ENCODE measurements at regions of chrX and their contacts with region 1.

Region 1: GRCh38 chrX:152157042-152157441 is 18.7 kb upstream of the MAGEA10 start:
- DNase-seq: no peak
- ATAC-seq: no peak
- H3K4me3 ChIP-seq: no peak overlapping the region
- H3K27ac ChIP-seq: no peak overlapping the region
- H3K4me1 ChIP-seq: no peaks in the 10 kb centered on the region
- H3K27me3 ChIP-seq: no peaks in the 10 kb centered on the region
- CTCF ChIP-seq: no peak

Region 2: DNA sequence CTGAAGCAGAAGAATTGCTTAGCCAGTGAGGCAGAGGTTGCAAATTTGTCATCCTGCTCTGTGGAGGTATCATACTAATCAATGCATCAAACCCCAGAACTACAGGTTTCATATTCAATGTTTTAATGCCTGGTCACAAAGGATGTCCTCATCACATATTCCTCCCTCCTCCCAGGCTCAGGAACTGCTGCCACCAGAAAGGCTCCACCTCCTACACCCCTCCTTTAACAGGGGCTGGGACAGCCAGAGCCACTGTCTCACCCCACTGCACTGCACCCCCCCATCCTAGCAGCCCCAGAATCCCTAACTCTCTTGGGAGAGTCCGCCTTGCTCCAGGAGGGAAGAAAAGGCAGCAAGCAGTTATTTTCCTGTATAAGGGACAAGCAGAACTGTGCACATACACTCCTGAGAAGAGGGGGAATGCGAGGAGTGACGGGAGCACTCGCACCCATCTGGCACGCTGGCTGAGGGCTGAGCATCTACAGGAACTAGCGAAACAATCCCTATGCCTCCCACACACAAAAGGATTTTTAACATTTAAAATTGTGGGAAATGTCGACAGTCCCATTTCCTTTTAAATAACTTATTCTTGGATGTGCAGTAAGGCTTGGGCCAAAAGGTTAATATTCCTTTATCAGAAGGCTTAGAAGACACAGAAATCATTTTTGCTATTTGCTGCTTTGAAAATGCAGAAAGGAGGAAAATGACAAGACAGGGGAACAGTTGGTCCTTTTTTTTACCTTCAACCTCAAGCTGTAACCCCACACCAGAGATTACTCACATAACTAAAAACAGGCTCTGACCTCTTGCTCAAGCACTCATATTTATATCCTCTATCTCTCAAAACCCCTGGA is 1286.3 kb before region 1 on chrX:
- intact Hi-C with region 1: no loop called
- DNase-seq: peak in 1 of 2 donors; percentile 3
- ATAC-seq: peak in 6 of 8 donors; percentile 23 to 68 (median 53)
- H3K4me3 ChIP-seq: no peak overlapping the region
- H3K27ac ChIP-seq: peak overlapping the region in 8 of 10 donors; percentile 32 to 68 (median 52)
- H3K4me1 ChIP-seq: peaks cover 0 to 55% (median 32%) of the 10 kb centered on the region in 9 donors
- H3K27me3 ChIP-seq: no peaks in the 10 kb centered on the region
- CTCF ChIP-seq: no peak

Region 3: DNA sequence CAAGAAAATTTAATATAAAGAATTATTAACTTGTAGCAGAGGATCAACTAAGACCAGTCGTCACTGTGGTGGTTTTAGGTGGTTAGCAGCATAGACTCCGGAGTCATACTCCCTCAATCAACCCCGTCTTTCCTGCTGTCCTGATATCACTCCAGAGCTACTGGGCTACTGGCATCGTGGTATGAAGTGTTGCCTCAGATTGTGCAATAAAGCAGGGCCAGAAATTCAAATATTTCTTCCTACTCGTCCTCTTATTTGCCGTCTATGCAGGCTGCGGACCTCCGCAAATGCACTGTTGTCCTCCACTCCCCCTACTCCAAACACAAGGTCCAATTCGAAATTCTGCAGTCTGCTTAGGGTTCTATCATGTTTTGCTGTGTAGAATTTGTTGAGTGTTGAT is 17.5 kb before region 1 on chrX:
- intact Hi-C with region 1: loop called in 1 of 10 experiments (anchors 1 kb)
- DNase-seq: no peak
- ATAC-seq: no peak
- H3K4me3 ChIP-seq: no peak overlapping the region
- H3K27ac ChIP-seq: no peak overlapping the region
- H3K4me1 ChIP-seq: no peaks in the 10 kb centered on the region
- H3K27me3 ChIP-seq: no peaks in the 10 kb centered on the region
- CTCF ChIP-seq: no peak

Region 4: GRCh38 chrX:152212969-152213368 is 55.9 kb after region 1 on chrX:
- intact Hi-C with region 1: no loop called
- DNase-seq: no peak
- ATAC-seq: no peak
- H3K4me3 ChIP-seq: no peak overlapping the region
- H3K27ac ChIP-seq: no peak overlapping the region
- H3K4me1 ChIP-seq: no peaks in the 10 kb centered on the region
- H3K27me3 ChIP-seq: no peaks in the 10 kb centered on the region
- CTCF ChIP-seq: no peak

Region 5: GRCh38 chrX:152480269-152481212 is 323.5 kb after region 1 on chrX:
- intact Hi-C with region 1: no loop called
- DNase-seq: no peak
- ATAC-seq: no peak
- H3K4me3 ChIP-seq: no peak overlapping the region
- H3K27ac ChIP-seq: no peak overlapping the region
- H3K4me1 ChIP-seq: no peaks in the 10 kb centered on the region
- H3K27me3 ChIP-seq: no peaks in the 10 kb centered on the region
- CTCF ChIP-seq: no peak